Activated B cell treated with CpG ODN at 0.5 μM for 24 hours (primary cell): ENCODE measurements at regions of chr2 and their contacts with region 1.

Region 1: GRCh38 chr2:174007010-174007409 is 41.8 kb upstream of the SP3 start:
- DNase-seq: no peak
- ATAC-seq: no peak
- H3K4me3 Mint-ChIP-seq: no peak overlapping the region
- H3K27ac Mint-ChIP-seq: no peak overlapping the region
- H3K4me1 Mint-ChIP-seq: no peaks in the 10 kb centered on the region
- H3K27me3 Mint-ChIP-seq: no peaks in the 10 kb centered on the region
- CTCF ChIP-seq: no peak

Region 2: DNA sequence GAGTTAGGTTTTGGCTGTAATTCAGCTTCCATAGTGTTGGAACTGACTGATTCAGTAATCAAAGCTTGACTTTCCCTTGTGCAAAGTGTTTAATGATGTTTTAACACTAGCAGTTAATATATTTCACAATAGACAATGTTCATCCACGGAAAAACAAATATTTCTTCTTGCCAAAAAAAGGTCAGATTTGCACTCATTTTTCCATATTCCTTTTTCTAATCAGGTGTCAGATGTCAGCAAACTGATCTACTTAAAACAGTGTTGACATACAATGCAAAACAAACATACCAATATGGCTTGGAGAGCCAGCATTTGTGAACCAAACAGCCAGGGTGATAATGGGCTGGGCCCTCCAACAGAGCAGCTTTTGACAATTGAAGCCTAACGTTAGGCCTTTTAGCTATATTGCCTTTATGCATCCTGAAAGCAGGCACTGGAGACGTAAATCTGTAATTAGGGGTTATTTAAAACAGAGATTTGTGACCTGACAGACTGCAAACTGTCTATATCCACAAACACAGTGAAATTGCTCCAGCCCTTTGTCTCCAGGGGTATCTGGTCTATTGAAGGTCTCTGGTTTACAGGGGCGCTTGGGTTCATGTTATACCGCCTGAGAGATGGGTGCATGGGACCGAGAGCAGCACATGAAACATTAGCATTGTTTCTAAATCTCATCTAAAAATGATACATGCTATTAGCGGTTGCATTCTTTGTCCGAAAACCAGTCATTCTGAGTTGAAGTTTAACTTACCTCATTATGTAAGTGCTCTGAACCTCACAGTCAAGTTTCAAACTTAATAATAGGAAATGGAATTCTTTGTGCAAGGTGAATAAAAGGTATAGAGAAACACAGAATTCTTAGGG is 659.5 kb before region 1 on chr2:
- CTCF ChIA-PET with region 1: no interaction called
- POLR2A ChIA-PET with region 1: no interaction called
- intact Hi-C with region 1: no loop called
- DNase-seq: no peak
- ATAC-seq: no peak
- H3K4me3 Mint-ChIP-seq: no peak overlapping the region
- H3K27ac Mint-ChIP-seq: no peak overlapping the region
- H3K4me1 Mint-ChIP-seq: no peaks in the 10 kb centered on the region
- H3K27me3 Mint-ChIP-seq: peaks cover under 1% of the 10 kb centered on the region
- CTCF ChIP-seq: no peak

Region 3: GRCh38 chr2:173720306-173720705 is 286.7 kb before region 1 on chr2:
- CTCF ChIA-PET with region 1: no interaction called
- POLR2A ChIA-PET with region 1: no interaction called
- intact Hi-C with region 1: no loop called
- DNase-seq: no peak
- ATAC-seq: no peak
- H3K4me3 Mint-ChIP-seq: no peak overlapping the region
- H3K27ac Mint-ChIP-seq: no peak overlapping the region
- H3K4me1 Mint-ChIP-seq: no peaks in the 10 kb centered on the region
- H3K27me3 Mint-ChIP-seq: peaks cover 49% of the 10 kb centered on the region
- CTCF ChIP-seq: no peak

Region 4: DNA sequence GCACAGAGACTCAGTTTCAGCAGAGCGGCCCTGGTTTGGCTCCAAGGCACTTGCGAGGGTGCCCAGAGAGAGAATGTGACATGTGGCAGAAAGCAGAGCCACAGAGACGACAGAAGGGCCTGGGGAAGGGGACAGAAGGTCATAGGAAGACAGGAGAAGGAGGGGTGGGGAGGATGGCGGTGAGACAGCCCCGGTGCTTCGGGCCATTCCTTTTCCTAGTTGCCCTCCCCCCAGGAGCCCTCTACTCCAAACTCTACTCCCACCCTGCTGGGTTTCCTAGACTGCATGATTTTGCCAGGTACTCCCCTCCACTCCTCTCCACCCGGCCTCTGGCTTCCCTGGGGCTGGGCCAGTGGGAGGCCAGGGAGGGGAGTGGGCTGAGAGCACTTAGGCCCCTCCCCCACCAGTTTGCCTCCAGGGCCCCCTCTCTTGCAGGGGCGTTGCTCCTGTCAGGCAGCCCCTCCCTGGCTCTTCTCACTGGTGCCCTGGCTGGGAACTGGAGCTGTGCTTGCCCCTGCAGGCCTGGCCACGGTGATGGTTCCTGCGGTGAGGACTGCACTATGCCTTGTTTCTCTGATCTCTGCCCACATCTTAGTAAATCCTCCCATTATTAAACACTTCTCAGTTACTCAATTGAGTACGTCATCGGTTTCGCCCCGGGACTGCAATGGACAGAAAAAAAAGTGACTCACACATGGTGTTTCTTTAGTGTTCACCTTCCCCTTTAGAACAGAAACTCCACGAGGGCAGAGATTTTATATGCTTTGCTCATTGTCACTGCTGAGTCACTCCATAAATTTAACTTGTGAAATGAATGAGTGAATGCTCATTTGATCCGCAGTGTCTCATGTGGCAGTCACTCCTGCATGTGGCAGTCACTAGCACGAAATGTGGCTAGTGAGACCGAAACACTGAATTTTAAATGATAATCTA is 16.8 kb after region 1 on chr2:
- CTCF ChIA-PET with region 1: no interaction called
- POLR2A ChIA-PET with region 1: no interaction called
- intact Hi-C with region 1: loop called (anchors 2 kb)
- DNase-seq: no peak
- ATAC-seq: peak; percentile 31
- H3K4me3 Mint-ChIP-seq: no peak overlapping the region
- H3K27ac Mint-ChIP-seq: no peak overlapping the region
- H3K4me1 Mint-ChIP-seq: peaks cover 11% of the 10 kb centered on the region
- H3K27me3 Mint-ChIP-seq: no peaks in the 10 kb centered on the region
- CTCF ChIP-seq: no peak